Right ventricle myocardium superior (tissue), 1 donor: ENCODE measurements at regions of chr17 and their contacts with region 1.

Region 1: DNA sequence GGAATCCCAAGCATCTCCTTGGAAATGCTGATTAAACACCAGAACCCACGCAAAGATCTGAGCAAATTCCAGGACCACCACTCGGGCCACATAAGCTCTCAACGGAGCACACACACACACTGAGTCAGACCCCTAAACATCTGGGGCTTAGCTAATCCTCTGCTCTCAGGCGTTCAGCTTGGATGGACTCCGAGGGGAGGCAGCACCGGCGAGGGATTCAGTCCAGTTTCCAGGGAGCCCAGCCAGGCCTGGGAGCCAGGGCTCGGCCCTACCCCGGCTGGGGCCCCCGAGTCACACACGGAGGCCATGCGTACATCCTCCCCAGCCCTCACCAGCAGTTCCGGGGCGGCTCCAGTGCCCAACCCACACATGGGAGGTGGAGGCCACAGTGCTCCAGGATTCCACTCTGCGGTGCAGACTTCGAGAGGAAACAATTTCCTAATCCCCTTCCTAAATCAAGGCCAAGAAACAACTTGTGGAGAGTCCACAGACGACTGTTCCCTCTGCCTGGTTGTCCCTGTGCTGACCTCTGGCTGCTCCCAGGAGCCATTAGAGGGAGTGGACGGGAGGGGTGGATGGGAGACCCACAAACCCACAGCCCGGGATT is 70.5 kb downstream of the GAS7 start:
- DNase-seq: peak; percentile 92
- ATAC-seq: peak; percentile 79

Region 2: GRCh38 chr17:9714801-9715200 is 413.1 kb before region 1 on chr17:
- intact Hi-C with region 1: no loop called
- DNase-seq: no peak
- ATAC-seq: no peak

Region 3: DNA sequence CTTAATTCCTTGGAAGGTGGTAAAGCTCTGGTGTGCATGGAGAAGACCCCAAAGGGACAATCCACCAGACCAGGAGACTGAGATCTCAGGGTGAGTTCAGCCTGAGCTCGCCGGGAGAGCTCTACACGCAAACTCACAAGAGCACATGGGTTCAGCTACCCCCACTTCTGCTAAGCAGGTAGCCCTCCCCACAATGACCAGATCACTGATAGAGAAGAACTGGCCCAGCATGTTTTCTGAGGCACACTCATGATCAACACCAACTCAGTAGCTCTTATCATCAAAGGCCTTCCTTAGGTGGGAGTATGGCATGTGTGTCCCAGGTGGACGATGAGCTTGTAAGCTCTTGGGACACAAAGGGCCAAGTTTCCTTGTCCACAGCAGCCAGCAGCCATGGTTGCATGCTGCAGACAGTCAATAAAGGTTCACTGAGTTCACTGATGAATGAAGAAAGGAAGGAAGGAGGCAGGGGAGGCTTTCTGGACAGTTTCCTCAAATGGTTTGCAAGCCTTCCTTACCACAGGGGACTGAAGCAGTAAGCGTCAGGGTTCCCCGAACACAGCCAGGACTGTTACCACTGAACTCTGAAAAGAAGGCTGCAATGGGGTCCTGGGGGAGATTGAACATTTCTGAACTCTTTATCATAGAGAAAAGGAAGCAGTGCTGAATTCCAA is 40.7 kb before region 1 on chr17:
- intact Hi-C with region 1: no loop called
- DNase-seq: no peak
- ATAC-seq: peak; percentile 17

Region 4: GRCh38 chr17:10198509-10199253 is 70.8 kb after region 1 on chr17 and contains the start of gene GAS7:
- intact Hi-C with region 1: loop called (anchors 10 kb)
- DNase-seq: peak; percentile 87
- ATAC-seq: peak; percentile 71
- total RNA-seq, gene GAS7: 72.1 TPM

Region 5: DNA sequence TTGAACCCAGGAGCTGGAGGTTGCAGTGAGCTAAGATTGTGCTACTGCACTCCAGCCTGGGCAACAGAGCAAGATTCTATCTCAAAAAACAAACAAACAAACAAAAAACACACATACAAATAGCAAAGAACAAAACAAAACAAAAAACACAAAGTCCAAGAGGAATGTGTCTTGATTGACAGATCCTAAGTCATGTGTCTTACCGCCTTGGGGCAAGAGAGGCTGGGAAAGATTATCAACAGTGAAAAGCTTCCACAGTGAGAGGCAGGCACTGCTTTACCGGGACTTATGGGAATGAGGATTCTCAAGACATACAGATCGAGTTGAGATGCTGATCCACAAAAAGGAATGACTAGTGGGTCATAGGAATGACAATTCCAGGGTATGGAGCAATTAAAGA is 133.2 kb after region 1 on chr17:
- intact Hi-C with region 1: no loop called
- DNase-seq: no peak
- ATAC-seq: no peak

Region 6: DNA sequence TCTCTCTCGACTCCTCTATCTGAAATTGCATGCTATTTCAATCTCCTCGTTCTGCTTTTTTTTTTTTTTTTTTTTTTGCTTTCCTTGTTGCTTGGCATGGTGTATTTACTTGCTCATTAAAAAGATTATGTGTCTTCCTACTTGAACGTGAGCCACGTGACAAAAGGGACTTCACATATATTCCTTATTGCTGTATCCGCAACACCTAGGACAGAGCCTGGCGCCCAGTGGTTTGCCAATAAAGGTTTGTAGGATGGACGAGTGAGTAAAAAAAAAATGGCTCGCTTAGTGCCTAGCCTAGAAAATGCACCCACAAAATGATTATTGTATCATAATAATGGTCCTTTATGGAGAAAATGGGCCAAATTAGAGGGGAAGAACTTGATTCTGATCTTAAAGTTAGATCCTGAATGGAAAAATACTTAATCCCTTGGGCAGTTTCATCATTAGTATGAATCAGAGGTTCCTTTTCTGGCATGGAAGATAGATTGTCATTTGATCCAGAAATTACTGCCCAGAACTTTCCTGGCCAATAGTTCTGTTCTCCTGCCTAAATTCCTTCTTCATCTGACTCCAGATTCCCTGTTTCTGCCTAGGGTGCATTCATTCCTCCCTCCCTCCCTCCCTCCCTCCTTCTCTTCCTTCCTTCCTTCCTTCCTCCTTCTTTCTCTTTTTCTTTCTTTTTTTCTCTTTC is 615.5 kb after region 1 on chr17:
- intact Hi-C with region 1: no loop called
- DNase-seq: no peak
- ATAC-seq: peak; percentile 82